Activated CD4-positive, alpha-beta T cell treated with anti-CD3 and anti-CD28 coated beads for 36 hours (primary cell): ENCODE measurements at regions of chr3 and their contacts with region 1.

Region 1: DNA sequence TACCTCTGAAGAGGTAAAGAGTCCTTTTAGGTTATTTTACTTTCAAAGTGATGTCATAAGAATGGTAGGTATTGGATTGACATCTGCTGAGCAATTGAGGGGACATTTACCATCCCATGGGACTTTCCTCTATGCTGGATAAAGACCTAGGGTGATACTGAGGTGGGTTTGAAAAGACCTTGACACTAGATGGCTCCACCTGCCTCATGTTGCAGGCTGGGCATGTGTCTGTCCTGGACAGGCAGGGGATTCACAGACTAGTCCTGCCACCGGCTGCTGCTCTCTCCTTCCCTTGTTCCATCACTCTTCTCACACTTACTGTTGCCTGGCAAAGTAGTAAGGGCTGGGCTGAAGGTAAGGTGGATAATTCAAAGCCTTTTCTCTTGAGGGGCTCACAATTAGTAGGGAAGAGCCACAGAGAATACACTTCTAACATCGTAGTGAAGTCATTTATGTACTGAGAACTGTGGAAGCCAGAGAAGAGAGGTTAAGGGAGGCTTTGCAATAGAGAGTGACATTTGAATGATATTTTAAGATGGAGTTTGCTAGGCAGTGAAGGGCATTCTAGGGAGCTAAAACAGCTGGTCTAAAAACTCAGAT is 27.7 kb downstream of the TRAK1 start:
- DNase-seq: peak; percentile 37
- ATAC-seq: peak; percentile 66
- H3K4me3 Mint-ChIP-seq: no peak overlapping the region
- H3K27ac Mint-ChIP-seq: no peak overlapping the region
- H3K4me1 Mint-ChIP-seq: peaks cover 20% of the 10 kb centered on the region
- H3K27me3 Mint-ChIP-seq: no peaks in the 10 kb centered on the region

Region 2: DNA sequence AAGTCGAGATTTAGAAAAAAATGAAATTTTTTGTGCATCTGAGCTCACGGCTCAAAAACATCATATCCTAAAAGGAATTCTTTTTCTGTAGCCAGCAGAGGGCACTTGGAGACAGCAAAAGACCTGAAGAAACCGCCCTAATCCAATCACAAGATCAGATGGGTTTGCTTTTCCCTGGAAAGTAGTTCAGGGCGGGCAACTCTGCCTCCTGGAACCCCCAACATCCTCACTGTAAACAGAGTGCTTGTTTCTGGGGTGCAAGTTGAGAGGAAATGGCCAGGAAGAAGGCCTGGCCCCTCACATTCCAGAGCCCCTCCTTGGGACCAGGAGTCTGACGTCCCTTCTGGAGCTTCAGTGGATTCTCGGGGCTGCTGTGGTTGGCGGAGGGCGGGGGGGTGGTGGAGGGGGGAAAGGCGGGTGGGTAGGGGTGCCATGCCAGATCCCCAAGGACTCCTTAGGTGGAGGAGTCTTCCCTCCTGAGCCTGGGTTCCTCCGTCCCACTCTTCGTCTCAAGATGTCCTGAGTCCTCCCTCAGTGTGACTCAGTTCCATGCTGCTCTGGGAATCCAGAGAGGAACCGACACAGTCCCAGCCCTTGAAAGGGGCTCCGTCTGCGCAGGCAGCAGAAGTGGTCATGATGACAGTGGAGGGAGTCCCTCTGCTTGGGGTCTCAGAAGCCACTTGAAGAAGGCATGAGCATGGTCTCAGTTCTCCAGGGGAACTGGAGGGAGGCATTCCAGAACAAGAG is 111.3 kb after region 1 on chr3:
- CTCF ChIA-PET with region 1: no interaction called
- POLR2A ChIA-PET with region 1: no interaction called
- intact Hi-C with region 1: loop called in 1 of 2 experiments (anchors 2 kb)
- DNase-seq: no peak
- ATAC-seq: no peak
- H3K4me3 Mint-ChIP-seq: no peak overlapping the region
- H3K27ac Mint-ChIP-seq: no peak overlapping the region
- H3K4me1 Mint-ChIP-seq: peaks cover 2% of the 10 kb centered on the region
- H3K27me3 Mint-ChIP-seq: peaks cover 12% of the 10 kb centered on the region

Region 3: DNA sequence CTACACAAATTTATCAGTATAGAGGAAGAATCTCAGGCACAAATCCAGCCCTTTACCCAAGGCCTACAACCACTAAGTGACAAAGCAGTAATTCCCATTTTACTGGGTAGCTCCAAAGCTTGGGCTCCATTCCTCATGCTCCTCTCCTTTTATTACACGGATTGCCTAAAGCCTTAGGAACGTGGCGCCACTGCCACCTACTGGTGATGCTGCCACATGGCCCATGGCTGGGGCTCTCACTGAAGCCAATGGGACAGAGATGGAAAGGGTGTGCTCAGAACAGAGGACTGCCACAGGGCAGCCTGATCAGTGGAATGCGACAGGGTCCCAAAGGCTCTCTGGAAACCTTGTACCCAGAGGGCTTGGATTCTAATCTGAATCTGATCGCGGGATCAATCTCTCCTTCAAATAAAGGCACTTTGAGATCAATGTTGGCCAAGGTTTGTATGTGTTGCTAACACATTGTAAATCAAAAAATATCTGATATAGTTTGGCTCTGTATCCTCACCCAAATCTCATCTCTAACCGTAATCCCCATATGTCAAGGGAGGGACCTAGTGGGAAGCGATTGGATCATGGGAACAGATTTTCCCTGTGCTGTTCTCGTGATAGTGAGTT is 325.1 kb after region 1 on chr3:
- CTCF ChIA-PET with region 1: no interaction called
- POLR2A ChIA-PET with region 1: no interaction called
- intact Hi-C with region 1: loop called in 1 of 2 experiments (anchors 5 kb)
- DNase-seq: peak; percentile 89
- ATAC-seq: peak; percentile 96
- H3K4me3 Mint-ChIP-seq: no peak overlapping the region
- H3K27ac Mint-ChIP-seq: no peak overlapping the region
- H3K4me1 Mint-ChIP-seq: no peaks in the 10 kb centered on the region
- H3K27me3 Mint-ChIP-seq: peaks cover 2% of the 10 kb centered on the region